ENCODE measurements at regions of chr1 and their contacts with region 1.

Region 1: DNA sequence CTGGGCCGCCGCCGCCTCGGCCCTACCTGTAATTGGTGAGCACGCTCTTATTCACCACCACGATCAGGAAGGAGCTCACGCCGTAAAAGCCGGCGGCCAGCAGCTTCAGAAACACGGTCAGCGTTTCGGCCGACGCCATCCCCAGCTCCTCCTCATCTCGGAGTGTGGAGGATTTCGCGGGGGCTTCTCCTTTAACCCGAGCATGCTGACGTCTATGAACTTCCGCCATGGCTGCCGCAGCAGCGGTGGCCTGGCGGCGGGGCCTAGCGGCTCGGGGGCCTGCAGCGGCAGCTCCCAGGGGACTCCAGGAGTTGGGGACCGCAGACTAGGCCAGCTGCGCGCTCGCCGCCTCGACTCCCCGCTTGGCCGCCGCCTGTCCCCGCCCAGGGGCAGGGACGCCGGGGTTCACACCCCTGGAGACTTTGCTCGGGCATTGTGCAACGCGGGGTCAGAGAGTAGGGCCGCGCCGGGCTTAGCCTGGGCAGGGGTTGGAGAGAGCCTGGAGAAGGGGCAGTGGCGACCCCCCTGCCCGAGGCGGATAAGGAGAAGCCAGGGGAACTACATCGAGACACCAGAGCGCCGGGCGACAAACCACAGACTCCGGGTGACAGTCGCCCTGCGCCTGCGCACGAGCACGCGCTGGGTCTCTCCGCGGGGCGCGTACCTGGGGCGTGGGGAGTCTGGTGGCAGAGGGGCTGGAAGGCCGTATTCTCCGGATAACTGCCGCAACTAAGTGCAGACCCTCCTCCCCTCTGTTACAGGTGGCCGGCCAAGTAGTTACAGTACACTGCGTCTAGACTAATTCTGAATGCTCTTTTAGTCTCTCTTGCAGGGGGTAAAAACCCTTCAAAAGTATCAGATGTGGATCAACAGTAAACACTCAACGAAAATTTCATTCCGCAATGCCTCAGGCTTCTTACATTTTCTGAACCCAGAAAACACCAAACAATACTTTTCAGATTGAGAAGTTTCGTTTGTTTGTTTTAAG is at the start of gene SLC35D1:
- DNase-seq: peak; percentile 81 to 89
- ATAC-seq: peak; percentile 95
- H3K4me3 ChIP-seq: peak within 1 kb of the TSS; percentile 48 to 91
- H3K27ac ChIP-seq: peak within 1 kb of the TSS; percentile 90 to 93
- H3K4me1 ChIP-seq: peaks cover 0 to 7% of the 10 kb centered on the region in 2 donors
- H3K27me3 ChIP-seq: no peaks in the 10 kb centered on the region
- total RNA-seq, gene SLC35D1: 14.1 to 17.8 TPM

Region 2: DNA sequence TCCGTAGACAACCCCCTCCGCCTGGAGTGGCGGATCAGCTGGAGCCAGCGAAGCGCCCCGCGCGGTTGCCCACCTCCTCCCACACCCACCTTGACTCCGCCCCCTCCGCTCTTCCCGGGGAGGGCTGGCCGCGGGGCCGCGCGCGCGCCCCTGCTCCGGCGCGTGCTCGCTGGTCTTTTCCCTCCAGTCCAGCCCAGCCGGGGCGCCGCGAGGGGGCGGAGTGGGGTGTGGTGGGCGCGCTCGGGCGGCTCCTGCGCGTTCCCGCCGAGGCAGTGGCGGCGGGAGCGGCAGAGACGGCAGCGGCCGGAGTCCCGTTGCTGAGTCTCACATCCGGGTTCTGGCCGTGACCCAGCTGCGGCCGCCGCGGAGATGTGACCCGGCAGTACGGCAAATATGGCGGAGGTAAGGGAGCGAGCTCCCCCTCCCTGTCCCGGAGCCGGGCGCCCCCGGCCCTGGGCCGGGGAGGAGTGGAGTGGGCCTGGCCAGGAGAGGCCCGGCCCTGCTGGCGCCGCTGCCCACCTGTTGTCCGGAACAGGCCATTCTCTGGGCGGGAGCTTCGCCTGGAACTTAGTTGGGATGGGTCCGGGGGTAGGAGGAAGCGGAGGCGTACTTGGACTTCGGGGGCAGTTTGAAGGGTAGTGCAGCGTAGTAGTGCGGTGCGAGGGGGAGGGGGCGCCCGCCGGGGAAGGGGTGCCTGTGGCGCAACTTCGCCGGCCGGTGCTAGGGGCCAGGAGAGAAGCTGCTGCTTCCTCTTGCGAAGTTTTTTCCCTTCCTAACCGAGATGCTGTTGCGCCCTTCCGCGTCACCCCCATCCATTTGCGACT is 123.9 kb before region 1 on chr1:
- intact Hi-C with region 1: loop called in 1 of 2 experiments (anchors 10 kb)
- DNase-seq: peak; percentile 96 to 99
- ATAC-seq: peak; percentile 94
- H3K4me3 ChIP-seq: peak overlapping the region; percentile 74 to 94
- H3K27ac ChIP-seq: peak overlapping the region; percentile 74 to 80
- H3K4me1 ChIP-seq: peaks cover 2 to 3% of the 10 kb centered on the region in 2 donors
- H3K27me3 ChIP-seq: no peaks in the 10 kb centered on the region

Region 3: GRCh38 chr1:66996018-66996682 is 57.9 kb before region 1 on chr1:
- intact Hi-C with region 1: loop called (anchors 5 kb)
- DNase-seq: peak in 1 of 2 donors; percentile 57
- ATAC-seq: peak; percentile 85
- H3K4me3 ChIP-seq: no peak overlapping the region
- H3K27ac ChIP-seq: no peak overlapping the region
- H3K4me1 ChIP-seq: peaks cover 0 to 3% of the 10 kb centered on the region in 2 donors
- H3K27me3 ChIP-seq: no peaks in the 10 kb centered on the region

Region 4: GRCh38 chr1:67001682-67002425 is 52.2 kb before region 1 on chr1:
- intact Hi-C with region 1: loop called (anchors 5 kb)
- DNase-seq: no peak
- ATAC-seq: peak; percentile 44
- H3K4me3 ChIP-seq: no peak overlapping the region
- H3K27ac ChIP-seq: peak overlapping the region; percentile 22 to 32
- H3K4me1 ChIP-seq: peaks cover 0 to 4% of the 10 kb centered on the region in 2 donors
- H3K27me3 ChIP-seq: no peaks in the 10 kb centered on the region

Region 5: DNA sequence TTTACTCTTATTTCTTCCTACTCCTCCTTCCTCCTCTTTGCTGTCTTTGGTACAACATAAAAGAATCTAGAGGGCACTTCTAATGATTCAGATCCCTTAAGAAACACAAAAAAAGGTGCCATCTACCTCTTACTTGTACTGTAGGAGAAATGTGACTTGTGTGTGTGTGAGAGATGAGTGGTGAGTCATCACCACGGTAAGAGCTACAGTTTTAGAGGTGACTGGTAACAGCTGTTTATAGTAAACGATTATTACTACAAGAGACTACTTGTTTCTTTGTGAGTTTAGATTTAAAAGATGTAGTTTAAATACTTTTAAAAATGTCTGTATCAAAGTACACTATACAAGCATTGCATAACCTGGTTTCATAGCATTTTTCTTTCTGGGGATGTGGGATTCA is 40.5 kb before region 1 on chr1:
- intact Hi-C with region 1: loop called in 1 of 2 experiments (anchors 5 kb)
- DNase-seq: no peak
- ATAC-seq: no peak
- H3K4me3 ChIP-seq: no peak overlapping the region
- H3K27ac ChIP-seq: no peak overlapping the region
- H3K4me1 ChIP-seq: no peaks in the 10 kb centered on the region
- H3K27me3 ChIP-seq: no peaks in the 10 kb centered on the region

Region 6: DNA sequence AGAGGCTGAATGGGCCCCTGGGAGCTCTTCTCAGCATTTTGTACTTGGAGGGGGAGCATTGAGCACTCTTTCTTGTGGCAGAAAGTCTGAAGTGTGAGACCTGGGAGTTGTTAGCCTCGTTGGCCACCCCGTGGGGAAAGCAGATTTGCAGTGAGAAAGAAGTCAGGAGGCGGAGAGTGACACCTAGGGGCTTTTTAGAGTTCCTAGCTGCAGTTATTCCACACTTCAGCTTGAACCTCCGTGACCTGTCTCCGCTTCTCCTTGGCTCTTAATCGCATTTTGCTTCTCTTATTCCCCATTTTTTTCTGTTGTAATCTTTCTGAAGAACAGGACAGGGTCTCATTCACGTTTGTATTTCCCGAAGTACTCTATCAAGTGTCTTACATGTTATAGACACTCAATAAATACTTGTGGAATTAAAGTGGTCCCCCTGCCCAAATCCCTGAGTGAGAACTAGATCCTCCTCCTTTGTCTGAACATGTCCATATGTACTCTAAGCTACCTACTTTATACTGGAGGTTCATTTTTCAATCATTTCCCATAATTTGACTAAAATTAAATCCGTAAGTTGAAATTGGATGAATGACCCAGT is 95.2 kb after region 1 on chr1:
- intact Hi-C with region 1: loop called in 1 of 2 experiments (anchors 10 kb)
- DNase-seq: peak in 1 of 2 donors; percentile 68
- ATAC-seq: peak; percentile 88
- H3K4me3 ChIP-seq: no peak overlapping the region
- H3K27ac ChIP-seq: no peak overlapping the region
- H3K4me1 ChIP-seq: no peaks in the 10 kb centered on the region
- H3K27me3 ChIP-seq: no peaks in the 10 kb centered on the region

Measured in aorta (tissue), 5 donors.